ENCODE measurements at regions of chr11 and their contacts with region 1.

Region 1: GRCh38 chr11:117946842-117947526 is 17.8 kb upstream of the TMPRSS13 start:
- DNase-seq: peak; percentile 73 to 81
- ATAC-seq: peak; percentile 96 to 100
- H3K4me3 ChIP-seq: no peak overlapping the region
- H3K27ac ChIP-seq: peak overlapping the region in 1 of 2 experiments; percentile 63; a peak in 1 of 6 replicates
- H3K4me1 ChIP-seq: peaks cover 3% of the 10 kb centered on the region; the same call in 1 of the 3 replicates
- CTCF ChIP-seq: peak; percentile 81
- EP300 ChIP-seq: no peak
- POLR2A ChIP-seq: no peak
- RAD21 ChIP-seq: peak; percentile 89 to 90

Region 2: GRCh38 chr11:117110294-117110950 is 836.6 kb before region 1 on chr11:
- CTCF ChIA-PET with region 1: no interaction called
- POLR2A ChIA-PET with region 1: no interaction called
- DNase-seq: no peak
- ATAC-seq: no peak
- H3K4me3 ChIP-seq: no peak overlapping the region
- H3K27ac ChIP-seq: no peak overlapping the region
- H3K4me1 ChIP-seq: no peaks in the 10 kb centered on the region
- CTCF ChIP-seq: no peak
- EP300 ChIP-seq: no peak
- POLR2A ChIP-seq: no peak
- RAD21 ChIP-seq: no peak

Region 3: GRCh38 chr11:117443266-117444195 is 503.5 kb before region 1 on chr11:
- CTCF ChIA-PET with region 1: interaction called, 10 read pairs
- POLR2A ChIA-PET with region 1: no interaction called
- DNase-seq: peak; percentile 25 to 43
- ATAC-seq: peak; percentile 76 to 90; a peak in 5 of 6 replicates
- H3K4me3 ChIP-seq: no peak overlapping the region
- H3K27ac ChIP-seq: no peak overlapping the region
- H3K4me1 ChIP-seq: no peaks in the 10 kb centered on the region
- CTCF ChIP-seq: no peak
- EP300 ChIP-seq: no peak
- POLR2A ChIP-seq: no peak
- RAD21 ChIP-seq: peak; percentile 35 to 66; a peak in 3 of 5 replicates

Region 4: DNA sequence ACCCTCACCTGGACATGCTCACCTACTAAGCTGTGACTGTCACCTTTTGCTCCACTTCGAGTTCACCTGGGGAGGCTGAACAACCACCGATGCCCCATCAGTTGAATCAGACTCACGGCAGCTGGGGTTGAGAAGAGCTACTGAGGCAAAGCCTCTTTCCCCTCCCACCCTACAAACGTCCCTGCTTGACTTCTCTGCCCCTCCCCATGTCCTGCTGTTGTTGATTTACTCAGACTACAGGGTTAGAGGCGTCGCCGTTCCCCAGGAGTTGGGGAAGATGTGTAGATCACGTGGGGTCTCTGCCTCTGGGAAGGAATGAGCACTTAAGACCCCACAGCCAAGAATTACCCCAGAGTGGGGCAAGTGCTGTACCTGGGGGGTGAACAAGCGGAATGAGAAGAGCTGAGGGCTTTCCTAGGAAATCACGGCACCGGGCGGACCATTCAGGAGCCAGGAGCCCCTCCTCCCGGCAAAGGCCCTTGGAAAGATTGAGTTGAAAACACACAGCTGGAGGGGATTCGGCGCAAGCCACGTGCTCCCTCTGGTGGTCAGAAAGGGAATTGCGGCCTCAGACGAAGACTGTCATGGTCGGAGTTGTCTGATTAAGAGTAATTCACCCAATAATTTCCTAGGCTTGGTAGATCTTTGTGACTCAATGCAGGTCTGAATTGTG is 129.5 kb before region 1 on chr11:
- CTCF ChIA-PET with region 1: interaction called, 113 read pairs
- POLR2A ChIA-PET with region 1: no interaction called
- DNase-seq: peak; percentile 58 to 70
- ATAC-seq: peak; percentile 48 to 81; a peak in 4 of 6 replicates
- H3K4me3 ChIP-seq: no peak overlapping the region
- H3K27ac ChIP-seq: peak overlapping the region; percentile 73 to 75; a peak in 5 of 6 replicates
- H3K4me1 ChIP-seq: peaks cover 41% of the 10 kb centered on the region
- CTCF ChIP-seq: peak; percentile 85
- EP300 ChIP-seq: no peak
- POLR2A ChIP-seq: no peak
- RAD21 ChIP-seq: peak; percentile 73 to 82

Region 5: GRCh38 chr11:117843666-117844484 is 103.1 kb before region 1 on chr11:
- CTCF ChIA-PET with region 1: interaction called, 192 read pairs
- POLR2A ChIA-PET with region 1: interaction called, 5 read pairs
- DNase-seq: peak; percentile 18 to 64
- ATAC-seq: peak; percentile 75 to 85; a peak in 5 of 6 replicates
- H3K4me3 ChIP-seq: no peak overlapping the region
- H3K27ac ChIP-seq: no peak overlapping the region
- H3K4me1 ChIP-seq: no peaks in the 10 kb centered on the region
- CTCF ChIP-seq: peak; percentile 71
- EP300 ChIP-seq: no peak
- POLR2A ChIP-seq: no peak
- RAD21 ChIP-seq: peak; percentile 70 to 78

Region 6: DNA sequence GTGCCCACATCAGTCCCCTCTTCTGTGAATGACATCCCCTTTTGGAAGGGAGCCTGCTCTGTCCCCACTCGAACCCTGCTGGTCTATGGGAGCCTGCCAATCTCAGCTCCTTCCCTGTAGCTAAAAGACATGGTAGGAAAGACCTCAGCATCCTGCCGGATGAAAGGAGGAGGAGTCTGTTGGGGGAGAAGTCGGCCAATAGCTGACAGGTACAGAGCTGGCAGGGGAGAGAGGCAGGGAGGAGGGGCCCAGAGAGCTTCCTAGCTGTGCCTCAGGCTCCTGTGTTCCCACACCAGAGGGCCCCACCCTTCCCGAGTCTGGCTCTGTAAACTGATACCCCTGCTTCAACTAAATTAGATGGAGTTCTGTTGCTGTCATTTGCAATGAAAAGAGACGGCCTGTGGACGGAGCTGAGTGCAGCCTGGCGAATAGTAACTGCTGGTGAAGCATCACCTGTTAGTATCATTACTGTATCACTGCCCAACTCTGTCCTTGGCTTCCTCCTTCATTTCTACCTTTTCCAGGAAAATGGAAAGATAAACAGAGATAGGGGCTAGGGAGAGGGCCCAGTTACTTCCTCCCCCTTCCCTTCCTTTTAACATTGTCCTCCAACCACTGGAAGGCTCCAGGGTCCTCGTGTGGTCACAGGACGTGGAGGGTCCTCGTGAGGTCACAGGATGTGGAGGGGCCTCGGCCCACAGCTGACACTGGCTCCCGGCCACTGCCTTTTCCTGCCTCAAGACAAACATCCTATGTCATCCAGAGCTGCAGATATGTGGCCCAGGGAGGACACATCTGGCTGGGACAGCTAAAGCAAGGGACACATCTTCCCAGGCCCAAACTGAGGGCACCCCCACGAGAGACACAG is 85.6 kb before region 1 on chr11:
- CTCF ChIA-PET with region 1: interaction called, 14 read pairs
- POLR2A ChIA-PET with region 1: no interaction called
- DNase-seq: no peak
- ATAC-seq: no peak
- H3K4me3 ChIP-seq: no peak overlapping the region
- H3K27ac ChIP-seq: no peak overlapping the region
- H3K4me1 ChIP-seq: no peaks in the 10 kb centered on the region
- CTCF ChIP-seq: no peak
- EP300 ChIP-seq: no peak
- POLR2A ChIP-seq: no peak
- RAD21 ChIP-seq: no peak

Region 7: DNA sequence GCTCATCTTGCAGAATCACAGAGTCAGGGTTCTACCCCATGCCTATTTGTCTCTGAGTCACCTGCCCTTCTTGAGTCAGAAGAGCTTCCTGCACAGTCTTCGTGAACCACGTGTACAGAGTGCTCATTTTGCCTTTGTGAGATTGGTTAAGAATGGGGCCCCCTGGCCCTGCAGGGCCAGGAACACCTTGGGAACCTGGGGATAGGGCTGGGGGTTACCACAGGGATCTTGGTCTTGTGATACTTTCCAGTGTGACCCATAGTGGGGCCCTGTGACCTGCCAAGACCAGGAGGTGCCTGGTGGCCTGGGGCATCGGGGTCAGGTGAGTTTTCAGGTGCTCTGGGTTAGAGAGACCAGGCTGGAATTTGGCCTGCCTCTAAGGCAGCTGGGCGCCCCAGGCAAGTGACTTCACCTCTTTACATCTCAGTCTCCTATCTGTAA is 27.2 kb before region 1 on chr11:
- CTCF ChIA-PET with region 1: interaction called, 10 read pairs
- POLR2A ChIA-PET with region 1: no interaction called
- DNase-seq: no peak
- ATAC-seq: no peak
- H3K4me3 ChIP-seq: no peak overlapping the region
- H3K27ac ChIP-seq: no peak overlapping the region
- H3K4me1 ChIP-seq: no peaks in the 10 kb centered on the region
- CTCF ChIP-seq: no peak
- EP300 ChIP-seq: no peak
- POLR2A ChIP-seq: no peak
- RAD21 ChIP-seq: no peak

Region 8: DNA sequence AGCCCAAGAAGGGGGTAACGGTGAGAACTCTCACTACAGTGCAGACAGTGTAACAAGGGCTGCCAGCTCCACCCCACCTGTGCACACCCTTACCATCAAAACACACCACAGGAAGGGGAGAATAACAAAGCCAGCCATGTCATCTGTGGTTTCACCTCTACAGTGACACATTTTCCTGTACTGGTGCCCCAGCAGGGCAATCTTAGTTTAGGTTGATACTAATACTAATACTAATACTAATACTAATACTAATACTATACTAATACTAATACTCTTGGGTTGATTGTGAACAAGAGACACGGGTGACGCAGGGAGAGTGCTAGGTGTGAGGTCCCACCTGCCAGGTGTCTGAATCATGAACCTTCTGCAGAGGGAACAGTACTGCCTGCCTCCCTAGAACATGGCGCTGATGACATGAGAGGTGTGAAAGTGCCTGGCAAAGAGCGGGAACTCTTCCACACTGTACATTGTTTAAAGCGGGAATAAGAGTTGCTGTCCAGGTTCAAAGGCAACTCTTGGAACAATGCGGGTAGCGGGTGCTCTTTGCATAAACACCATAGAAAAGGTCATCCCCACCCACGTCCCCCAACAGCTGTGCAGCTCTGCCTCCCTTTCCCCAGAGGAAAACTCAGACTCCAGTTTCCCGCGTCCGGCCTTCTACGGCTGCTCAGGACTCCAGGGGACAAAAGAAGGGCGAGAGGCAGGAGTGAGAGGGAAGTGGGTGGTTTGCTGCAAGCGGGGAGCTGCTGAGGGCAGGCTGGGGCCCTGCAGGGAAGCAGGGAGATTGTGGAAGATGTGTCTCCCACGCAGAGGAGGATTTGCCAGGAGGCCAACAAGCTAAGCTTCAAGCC is 104.9 kb after region 1 on chr11:
- CTCF ChIA-PET with region 1: interaction called, 35 read pairs
- POLR2A ChIA-PET with region 1: no interaction called
- DNase-seq: no peak
- ATAC-seq: no peak
- H3K4me3 ChIP-seq: no peak overlapping the region
- H3K27ac ChIP-seq: no peak overlapping the region
- H3K4me1 ChIP-seq: no peaks in the 10 kb centered on the region
- CTCF ChIP-seq: no peak
- EP300 ChIP-seq: no peak
- POLR2A ChIP-seq: no peak
- RAD21 ChIP-seq: no peak

Measured in A549 (cell line).